Activated CD4-positive, alpha-beta T cell treated with anti-CD3 and anti-CD28 coated beads for 36 hours (primary cell): ENCODE measurements at regions of chr14 and their contacts with region 1.

Region 1: DNA sequence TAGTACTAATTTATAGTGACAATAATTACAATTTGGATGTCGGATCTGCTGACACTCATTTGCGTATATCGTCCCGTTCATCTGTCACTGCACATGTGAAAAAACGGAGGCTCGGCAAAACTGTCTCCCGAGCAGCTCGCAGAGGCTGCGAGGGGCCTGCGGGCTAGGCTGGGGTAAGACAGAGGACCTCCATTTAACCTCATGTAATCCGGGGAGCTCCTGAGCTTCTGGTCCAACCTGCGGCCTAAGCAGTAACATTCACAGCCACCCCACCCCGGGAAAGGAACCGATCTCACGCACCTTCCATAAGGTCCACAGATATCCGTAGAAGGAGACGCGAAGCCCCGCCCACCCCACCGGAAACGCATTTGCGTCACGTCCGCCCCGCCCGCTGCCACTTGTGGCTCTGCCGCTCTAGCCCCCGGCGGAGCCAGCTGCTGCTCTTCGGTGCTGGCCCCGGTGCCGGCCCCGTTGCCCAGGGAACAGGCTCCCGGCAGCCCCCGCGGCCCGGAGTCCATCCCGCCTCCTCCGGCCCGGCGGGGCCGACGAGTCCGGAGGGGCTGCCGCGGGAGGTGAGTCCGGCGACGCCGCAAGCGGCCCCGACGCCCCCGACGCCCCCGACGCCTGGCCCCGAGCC is at the starts of genes CINP and TECPR2:
- DNase-seq: peak; percentile 99
- ATAC-seq: peak; percentile 78
- H3K4me3 Mint-ChIP-seq: no peak within 1 kb of the TSS
- H3K27ac Mint-ChIP-seq: peak within 1 kb of the TSS; percentile 96
- H3K4me1 Mint-ChIP-seq: peaks cover 36% of the 10 kb centered on the region
- H3K27me3 Mint-ChIP-seq: no peaks in the 10 kb centered on the region
- total RNA-seq, gene CINP: 47.0 to 51.4 TPM
- total RNA-seq, gene TECPR2: 5.6 to 6.9 TPM

Region 2: DNA sequence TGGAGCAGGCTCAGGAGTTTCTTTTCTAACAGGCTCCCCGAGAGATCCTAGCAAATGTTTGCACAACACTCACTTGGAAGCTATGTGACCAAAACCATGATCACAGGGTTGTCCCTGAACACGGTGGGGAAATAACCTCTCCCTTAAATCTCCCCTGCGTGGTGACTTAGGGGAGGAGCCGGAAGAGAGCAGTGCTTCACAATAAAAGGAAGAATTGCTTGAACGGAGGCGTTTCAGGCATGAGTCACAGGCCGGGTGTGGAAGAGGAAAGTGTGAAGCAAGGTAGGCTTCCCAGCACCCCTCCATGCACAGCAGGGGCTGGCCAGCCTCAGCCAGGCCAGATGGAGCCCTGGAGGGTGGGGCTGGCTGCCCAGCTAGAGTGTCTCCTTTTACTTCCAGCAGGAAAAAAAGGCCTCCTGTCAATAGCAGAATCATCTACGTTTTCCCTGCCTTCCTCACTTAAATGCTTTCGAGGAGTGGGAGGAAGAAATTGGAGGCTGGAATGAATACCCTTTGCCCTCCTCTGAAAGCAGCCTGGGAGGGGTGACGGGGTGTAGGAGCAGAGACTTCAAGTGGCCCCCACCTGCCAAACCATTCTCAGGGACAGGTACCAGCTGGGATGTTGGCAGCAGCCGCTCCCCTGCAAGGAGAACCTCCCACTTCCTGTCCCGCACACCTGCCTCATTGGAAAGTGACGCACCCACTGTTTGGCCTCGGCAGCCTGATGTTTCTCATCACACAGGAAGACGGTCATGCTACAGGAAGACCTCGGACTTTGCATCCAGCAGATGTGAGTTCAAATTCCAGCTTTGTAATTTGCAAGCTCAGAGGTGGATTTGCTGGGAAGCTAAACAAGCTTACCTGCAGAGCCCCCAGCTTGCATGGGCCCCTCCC is 631.2 kb before region 1 on chr14:
- CTCF ChIA-PET with region 1: no interaction called
- POLR2A ChIA-PET with region 1: no interaction called
- intact Hi-C with region 1: loop called in 1 of 2 experiments (anchors 1 kb)
- DNase-seq: peak; percentile 94
- ATAC-seq: peak; percentile 92
- H3K4me3 Mint-ChIP-seq: peak overlapping the region; percentile 66
- H3K27ac Mint-ChIP-seq: peak overlapping the region; percentile 97
- H3K4me1 Mint-ChIP-seq: peaks cover 64% of the 10 kb centered on the region
- H3K27me3 Mint-ChIP-seq: no peaks in the 10 kb centered on the region

Region 3: GRCh38 chr14:101767618-101768362 is 594.9 kb before region 1 on chr14:
- CTCF ChIA-PET with region 1: no interaction called
- POLR2A ChIA-PET with region 1: no interaction called
- intact Hi-C with region 1: loop called in 1 of 2 experiments (anchors 1 kb)
- DNase-seq: no peak
- ATAC-seq: no peak
- H3K4me3 Mint-ChIP-seq: no peak overlapping the region
- H3K27ac Mint-ChIP-seq: no peak overlapping the region
- H3K4me1 Mint-ChIP-seq: peaks cover 42% of the 10 kb centered on the region
- H3K27me3 Mint-ChIP-seq: no peaks in the 10 kb centered on the region

Region 4: GRCh38 chr14:102086972-102087761 is 275.5 kb before region 1 on chr14 and contains the start of gene HSP90AA1:
- CTCF ChIA-PET with region 1: no interaction called
- POLR2A ChIA-PET with region 1: no interaction called
- intact Hi-C with region 1: loop called in 1 of 2 experiments (anchors 1 kb)
- DNase-seq: peak; percentile 97
- ATAC-seq: peak; percentile 68
- H3K4me3 Mint-ChIP-seq: peak within 1 kb of the TSS; percentile 77
- H3K27ac Mint-ChIP-seq: peak within 1 kb of the TSS; percentile 92
- H3K4me1 Mint-ChIP-seq: peaks cover 46% of the 10 kb centered on the region
- H3K27me3 Mint-ChIP-seq: no peaks in the 10 kb centered on the region
- total RNA-seq, gene HSP90AA1: 1,344 to 1,372 TPM

Region 5: DNA sequence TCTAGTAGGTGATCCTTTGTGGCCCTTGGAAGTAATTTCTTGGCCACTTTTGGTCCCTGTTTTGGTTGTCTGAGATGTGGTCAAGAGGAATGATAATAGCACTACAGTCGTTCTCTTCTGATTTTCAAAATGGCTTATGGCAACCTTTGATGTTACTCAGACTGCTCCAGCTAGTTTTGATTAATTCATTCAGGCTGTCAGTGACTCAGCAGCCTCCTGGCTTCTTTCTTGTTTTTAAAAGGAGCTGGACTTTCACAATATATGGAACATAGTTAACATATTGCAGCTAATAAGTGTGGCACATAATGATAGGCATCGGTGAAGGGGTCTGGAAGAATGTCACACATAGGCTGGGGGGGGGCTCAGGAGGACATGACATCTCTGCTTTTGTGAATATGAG is 175.6 kb before region 1 on chr14:
- CTCF ChIA-PET with region 1: no interaction called
- POLR2A ChIA-PET with region 1: no interaction called
- intact Hi-C with region 1: loop called in 1 of 2 experiments (anchors 1 kb)
- DNase-seq: no peak
- ATAC-seq: no peak
- H3K4me3 Mint-ChIP-seq: no peak overlapping the region
- H3K27ac Mint-ChIP-seq: peak overlapping the region; percentile 79
- H3K4me1 Mint-ChIP-seq: peaks cover 61% of the 10 kb centered on the region
- H3K27me3 Mint-ChIP-seq: no peaks in the 10 kb centered on the region

Region 6: GRCh38 chr14:102524466-102525218 is 162.0 kb after region 1 on chr14:
- CTCF ChIA-PET with region 1: interaction called, 3 read pairs
- POLR2A ChIA-PET with region 1: no interaction called
- intact Hi-C with region 1: loop called in 1 of 2 experiments (anchors 1 kb)
- DNase-seq: peak; percentile 98
- ATAC-seq: peak; percentile 98
- H3K4me3 Mint-ChIP-seq: peak overlapping the region; percentile 68
- H3K27ac Mint-ChIP-seq: peak overlapping the region; percentile 32
- H3K4me1 Mint-ChIP-seq: peaks cover 35% of the 10 kb centered on the region
- H3K27me3 Mint-ChIP-seq: no peaks in the 10 kb centered on the region

Region 7: GRCh38 chr14:102819176-102819628 is 456.5 kb after region 1 on chr14:
- CTCF ChIA-PET with region 1: no interaction called
- POLR2A ChIA-PET with region 1: no interaction called
- intact Hi-C with region 1: loop called in 1 of 2 experiments (anchors 1 kb)
- DNase-seq: peak; percentile 91
- ATAC-seq: peak; percentile 74
- H3K4me3 Mint-ChIP-seq: peak overlapping the region; percentile 61
- H3K27ac Mint-ChIP-seq: peak overlapping the region; percentile 94
- H3K4me1 Mint-ChIP-seq: peaks cover 87% of the 10 kb centered on the region
- H3K27me3 Mint-ChIP-seq: no peaks in the 10 kb centered on the region

Region 8: GRCh38 chr14:103418481-103418818 is 1055.8 kb after region 1 on chr14:
- CTCF ChIA-PET with region 1: no interaction called
- POLR2A ChIA-PET with region 1: no interaction called
- intact Hi-C with region 1: no loop called
- DNase-seq: peak; percentile 30
- ATAC-seq: peak; percentile 63
- H3K4me3 Mint-ChIP-seq: no peak overlapping the region
- H3K27ac Mint-ChIP-seq: peak overlapping the region; percentile 80
- H3K4me1 Mint-ChIP-seq: peaks cover 47% of the 10 kb centered on the region
- H3K27me3 Mint-ChIP-seq: no peaks in the 10 kb centered on the region